K562 (cell line): ENCODE measurements at regions of chr1 and their contacts with region 1.

Region 1: GRCh38 chr1:37323486-37324377 is 150.6 kb upstream of the ZC3H12A start:
- DNase-seq: peak; percentile 67 to 88 (median 86)
- ATAC-seq: peak; percentile 72
- H3K4me3 ChIP-seq: no peak overlapping the region
- H3K27ac ChIP-seq: no peak overlapping the region
- H3K4me1 ChIP-seq: no peaks in the 10 kb centered on the region
- H3K27me3 ChIP-seq: peaks cover 4 to 8% of the 10 kb centered on the region in 2 experiments; a peak in 3 of 5 replicates
- CTCF ChIP-seq: peak; percentile 82 to 87 (median 86)
- EP300 ChIP-seq: no peak
- POLR2A ChIP-seq: no peak
- RAD21 ChIP-seq: peak; percentile 69 to 91

Region 2: DNA sequence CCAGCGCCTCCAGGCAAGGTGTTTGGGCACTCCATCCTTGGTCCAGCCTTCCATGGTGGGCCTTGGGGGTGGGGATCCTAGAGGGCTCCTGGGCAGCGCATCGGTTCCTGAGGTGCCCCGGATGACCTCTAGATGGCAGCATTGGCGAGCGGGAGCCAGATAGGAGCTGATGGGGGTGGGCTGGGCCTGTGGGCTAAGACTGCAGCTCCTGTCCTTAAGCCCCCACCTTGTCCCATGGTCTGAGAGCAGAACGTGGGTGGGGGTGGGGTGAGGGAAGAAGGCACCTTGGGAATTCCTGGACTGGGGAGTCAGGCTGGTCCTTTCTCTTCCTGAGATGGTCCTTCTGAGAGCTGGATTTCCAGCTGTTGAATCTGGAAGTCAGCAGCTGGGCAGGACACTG is 747.6 kb before region 1 on chr1:
- CTCF ChIA-PET with region 1: interaction called, 4 read pairs
- POLR2A ChIA-PET with region 1: no interaction called
- in situ Hi-C with region 1: no loop called
- intact Hi-C with region 1: loop called (anchors 10 kb)
- DNase-seq: peak; percentile 77 to 88 (median 86)
- ATAC-seq: peak; percentile 98
- H3K4me3 ChIP-seq: no peak overlapping the region
- H3K27ac ChIP-seq: no peak overlapping the region
- H3K4me1 ChIP-seq: peaks cover 0 to 3% of the 10 kb centered on the region in 2 experiments; a peak in 2 of 5 replicates
- H3K27me3 ChIP-seq: peaks cover 13 to 44% of the 10 kb centered on the region in 2 experiments
- CTCF ChIP-seq: peak; percentile 90 to 94 (median 93)
- EP300 ChIP-seq: no peak
- POLR2A ChIP-seq: no peak
- RAD21 ChIP-seq: peak; percentile 54 to 87; a peak in 3 of 4 replicates

Region 3: DNA sequence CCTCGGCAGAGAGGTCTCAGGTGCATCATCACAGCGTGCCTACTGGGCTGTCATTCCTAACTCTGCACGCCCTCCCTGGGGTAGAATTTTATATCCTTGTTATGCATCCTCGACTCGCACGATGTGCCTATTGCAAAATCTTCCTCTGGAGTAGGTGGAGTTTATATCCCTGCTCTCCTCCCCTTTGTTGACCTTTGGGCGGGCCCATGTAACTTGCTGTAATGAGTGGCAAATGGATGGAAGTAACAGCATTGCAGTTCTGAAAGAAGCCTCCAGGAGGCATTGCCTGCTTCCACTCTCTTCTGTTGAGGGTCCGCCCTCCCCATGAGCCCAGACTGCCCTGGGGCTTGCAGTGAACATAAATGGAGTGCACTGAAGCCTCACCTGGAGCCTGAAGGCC is 227.3 kb before region 1 on chr1:
- CTCF ChIA-PET with region 1: no interaction called
- POLR2A ChIA-PET with region 1: no interaction called
- in situ Hi-C with region 1: no loop called
- intact Hi-C with region 1: loop called (anchors 10 kb)
- DNase-seq: peak; percentile 41 to 57 (median 52)
- ATAC-seq: peak; percentile 97
- H3K4me3 ChIP-seq: no peak overlapping the region
- H3K27ac ChIP-seq: no peak overlapping the region
- H3K4me1 ChIP-seq: no peaks in the 10 kb centered on the region
- H3K27me3 ChIP-seq: no peaks in the 10 kb centered on the region; a peak in 1 of 5 replicates
- CTCF ChIP-seq: peak; percentile 49 to 65 (median 62); a peak in 5 of 6 replicates
- EP300 ChIP-seq: no peak
- POLR2A ChIP-seq: no peak
- RAD21 ChIP-seq: peak in 1 of 2 experiments; percentile 41; a peak in 2 of 4 replicates

Region 4: GRCh38 chr1:37288900-37289299 is 34.8 kb before region 1 on chr1:
- CTCF ChIA-PET with region 1: no interaction called
- POLR2A ChIA-PET with region 1: no interaction called
- in situ Hi-C with region 1: no loop called
- intact Hi-C with region 1: no loop called
- DNase-seq: peak in 2 of 4 experiments; percentile 9 to 29
- ATAC-seq: peak; percentile 68
- H3K4me3 ChIP-seq: no peak overlapping the region
- H3K27ac ChIP-seq: no peak overlapping the region
- H3K4me1 ChIP-seq: no peaks in the 10 kb centered on the region
- H3K27me3 ChIP-seq: peaks cover 9 to 21% of the 10 kb centered on the region in 2 experiments; a peak in 3 of 5 replicates
- CTCF ChIP-seq: no peak
- EP300 ChIP-seq: no peak
- POLR2A ChIP-seq: no peak
- RAD21 ChIP-seq: no peak

Region 5: GRCh38 chr1:37391211-37392011 is 67.7 kb after region 1 on chr1:
- CTCF ChIA-PET with region 1: no interaction called
- POLR2A ChIA-PET with region 1: no interaction called
- in situ Hi-C with region 1: no loop called
- intact Hi-C with region 1: no loop called
- DNase-seq: peak in 2 of 4 experiments; percentile 26 to 50
- ATAC-seq: peak; percentile 82
- H3K4me3 ChIP-seq: no peak overlapping the region
- H3K27ac ChIP-seq: no peak overlapping the region
- H3K4me1 ChIP-seq: no peaks in the 10 kb centered on the region
- H3K27me3 ChIP-seq: peaks cover 6 to 32% of the 10 kb centered on the region in 2 experiments; a peak in 3 of 5 replicates
- CTCF ChIP-seq: peak; percentile 56 to 63 (median 58); a peak in 5 of 6 replicates
- EP300 ChIP-seq: no peak
- POLR2A ChIP-seq: no peak
- RAD21 ChIP-seq: peak in 1 of 2 experiments; percentile 64; a peak in 2 of 4 replicates